ENCODE measurements at regions of chr3 and their contacts with region 1.

Region 1: DNA sequence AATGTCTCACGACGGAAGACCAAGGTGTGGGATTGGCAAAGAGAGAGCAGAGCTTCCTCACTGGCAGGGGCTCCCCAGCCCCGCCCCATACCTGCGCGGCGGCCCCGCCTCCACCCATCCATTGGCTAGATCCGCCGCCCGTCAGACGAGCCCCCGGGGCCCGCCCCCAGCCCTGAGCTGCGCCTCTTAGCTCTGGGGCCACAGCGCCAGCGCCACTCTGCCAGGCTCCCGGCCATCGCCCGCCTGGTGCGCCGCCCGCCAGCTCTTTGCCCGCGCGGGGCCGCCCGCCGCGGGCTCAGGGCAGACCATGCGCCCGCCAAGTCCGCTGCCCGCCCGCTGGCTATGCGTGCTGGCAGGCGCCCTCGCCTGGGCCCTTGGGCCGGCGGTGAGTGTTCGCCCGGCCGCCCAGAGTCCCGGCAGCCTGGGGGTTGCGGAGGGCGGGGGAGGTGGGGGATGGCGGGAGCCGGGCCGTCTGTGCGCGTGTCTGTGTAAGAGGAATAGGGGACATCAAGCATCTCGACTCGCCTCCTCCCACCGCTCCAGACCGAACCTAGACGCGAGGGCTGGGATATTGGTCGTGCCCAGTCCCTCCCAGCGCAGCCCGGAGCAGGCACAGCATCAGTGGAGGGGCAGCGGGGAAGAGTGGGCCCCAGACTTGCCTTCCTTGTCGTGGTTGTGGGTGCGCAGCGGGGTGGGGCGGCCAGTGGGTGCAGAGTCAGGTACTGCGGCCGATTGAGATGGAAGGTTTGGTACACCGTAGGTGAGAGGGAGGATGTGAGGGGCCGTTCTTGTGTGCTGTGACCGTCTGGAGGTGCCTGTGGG is at the start of gene VIPR1:
- DNase-seq: peak; percentile 88 to 95
- H3K4me3 ChIP-seq: peak within 1 kb of the TSS; percentile 70
- H3K4me3 Mint-ChIP-seq: peak within 1 kb of the TSS; percentile 85
- H3K27ac Mint-ChIP-seq: no peak within 1 kb of the TSS
- H3K4me1 ChIP-seq: peaks cover 10% of the 10 kb centered on the region
- H3K4me1 Mint-ChIP-seq: peaks cover 16% of the 10 kb centered on the region
- H3K27me3 ChIP-seq: no peaks in the 10 kb centered on the region
- H3K27me3 Mint-ChIP-seq: peaks cover 10% of the 10 kb centered on the region
- CTCF ChIP-seq: no peak
- total RNA-seq, gene VIPR1: 3.7 and 3.8 TPM in 2 replicates

Region 2: GRCh38 chr3:42539869-42540714 is 37.5 kb after region 1 on chr3:
- CTCF ChIA-PET with region 1: interaction called, 39 read pairs
- POLR2A ChIA-PET with region 1: interaction called, 3 read pairs
- intact Hi-C with region 1: loop called (anchors 1 kb)
- DNase-seq: peak; percentile 84 to 87
- H3K4me3 ChIP-seq: no peak overlapping the region
- H3K4me3 Mint-ChIP-seq: no peak overlapping the region
- H3K27ac Mint-ChIP-seq: no peak overlapping the region
- H3K4me1 ChIP-seq: no peaks in the 10 kb centered on the region
- H3K4me1 Mint-ChIP-seq: no peaks in the 10 kb centered on the region
- H3K27me3 ChIP-seq: no peaks in the 10 kb centered on the region
- H3K27me3 Mint-ChIP-seq: no peaks in the 10 kb centered on the region
- CTCF ChIP-seq: peak; percentile 70 to 80

Region 3: GRCh38 chr3:42547401-42547945 is 44.8 kb after region 1 on chr3:
- CTCF ChIA-PET with region 1: interaction called, 9 read pairs
- POLR2A ChIA-PET with region 1: no interaction called
- intact Hi-C with region 1: loop called (anchors 1 kb)
- DNase-seq: peak; percentile 59 to 76
- H3K4me3 ChIP-seq: no peak overlapping the region
- H3K4me3 Mint-ChIP-seq: no peak overlapping the region
- H3K27ac Mint-ChIP-seq: no peak overlapping the region
- H3K4me1 ChIP-seq: no peaks in the 10 kb centered on the region
- H3K4me1 Mint-ChIP-seq: no peaks in the 10 kb centered on the region
- H3K27me3 ChIP-seq: no peaks in the 10 kb centered on the region
- H3K27me3 Mint-ChIP-seq: no peaks in the 10 kb centered on the region
- CTCF ChIP-seq: peak; percentile 87 to 94

Region 4: GRCh38 chr3:42755681-42756578 is 253.3 kb after region 1 on chr3:
- CTCF ChIA-PET with region 1: interaction called, 14 read pairs
- POLR2A ChIA-PET with region 1: no interaction called
- intact Hi-C with region 1: no loop called
- DNase-seq: peak; percentile 39 to 59
- H3K4me3 ChIP-seq: no peak overlapping the region
- H3K4me3 Mint-ChIP-seq: no peak overlapping the region
- H3K27ac Mint-ChIP-seq: no peak overlapping the region
- H3K4me1 ChIP-seq: peaks cover 7% of the 10 kb centered on the region; the same call in 1 of the 2 replicates
- H3K4me1 Mint-ChIP-seq: no peaks in the 10 kb centered on the region
- H3K27me3 ChIP-seq: no peaks in the 10 kb centered on the region
- H3K27me3 Mint-ChIP-seq: no peaks in the 10 kb centered on the region
- CTCF ChIP-seq: peak; percentile 32 to 49

Measured in Caco-2 (cell line).